Activated T-helper 1 cell treated with anti-CD3 and anti-CD28 coated beads, Interleukin-12 subunit alpha, Interleukin-12 subunit beta, Interleukin-2, Interleukin-4 antibody, amounts not matched to agents 30 ng/mL and 10 ng/mL and 1 ng/mL, durations not matched to agents 14 hours and 24 hours and 36 hours (primary cell): ENCODE measurements at regions of chr4 and their contacts with region 1.

Region 1: DNA sequence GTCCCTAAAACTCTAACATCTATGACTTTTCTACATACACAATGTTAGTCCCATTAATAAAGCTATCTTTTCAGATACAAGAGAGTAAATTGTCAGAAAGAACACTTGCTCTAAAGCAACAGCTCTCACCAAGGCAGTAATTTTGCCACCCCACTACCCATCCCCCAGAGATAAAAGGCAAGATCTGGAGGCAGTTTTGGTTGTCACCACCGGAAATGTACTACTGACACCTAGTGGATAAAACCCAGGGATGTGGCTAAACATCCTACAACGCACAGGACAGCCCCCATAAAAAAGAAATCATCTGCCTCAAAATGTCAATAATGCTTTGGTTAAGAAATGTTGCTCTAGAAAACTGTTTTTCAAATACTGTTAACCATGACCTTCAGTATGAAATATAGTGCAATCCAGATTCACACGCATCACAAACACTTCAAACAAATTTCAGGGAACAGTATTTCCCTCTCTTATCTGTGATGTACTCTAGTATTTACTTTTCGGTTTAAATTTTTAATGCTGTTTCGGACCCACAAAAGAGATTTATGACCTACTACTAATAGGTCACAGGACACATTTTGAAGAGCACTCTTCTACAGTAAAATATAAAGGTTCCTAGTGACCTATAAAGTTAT is 5.1 kb downstream of the FBXL5 start:
- DNase-seq: peak; percentile 60
- H3K4me3 Mint-ChIP-seq: peak overlapping the region; percentile 13
- H3K27ac Mint-ChIP-seq: peak overlapping the region; percentile 42
- H3K4me1 Mint-ChIP-seq: peaks cover 59% of the 10 kb centered on the region
- H3K27me3 Mint-ChIP-seq: no peaks in the 10 kb centered on the region

Region 2: DNA sequence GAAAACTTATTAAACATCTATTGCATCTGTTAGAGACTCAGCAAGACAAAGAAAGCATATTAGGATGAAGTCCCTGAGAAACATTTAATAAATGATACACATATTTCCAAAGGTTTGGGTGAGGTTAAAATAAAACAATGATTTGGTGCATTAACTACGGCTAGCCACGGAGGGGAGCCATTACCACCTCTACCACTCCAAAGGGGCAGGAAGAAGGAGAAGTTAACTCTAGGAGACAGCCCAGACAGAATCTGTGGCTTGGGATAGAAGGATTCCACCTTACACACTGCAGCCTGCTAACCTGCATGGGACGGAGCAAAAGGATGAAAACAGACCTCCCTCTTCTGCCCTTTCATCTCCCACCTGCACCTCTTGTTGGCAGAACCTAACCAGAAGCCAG is 411.3 kb before region 1 on chr4:
- intact Hi-C with region 1: loop called (anchors 1 kb)
- DNase-seq: no peak
- H3K4me3 Mint-ChIP-seq: no peak overlapping the region
- H3K27ac Mint-ChIP-seq: no peak overlapping the region
- H3K4me1 Mint-ChIP-seq: peaks cover 19% of the 10 kb centered on the region
- H3K27me3 Mint-ChIP-seq: no peaks in the 10 kb centered on the region

Region 3: GRCh38 chr4:15457406-15458201 is 192.4 kb before region 1 on chr4:
- intact Hi-C with region 1: loop called (anchors 1 kb)
- DNase-seq: no peak
- H3K4me3 Mint-ChIP-seq: no peak overlapping the region
- H3K27ac Mint-ChIP-seq: no peak overlapping the region
- H3K4me1 Mint-ChIP-seq: no peaks in the 10 kb centered on the region
- H3K27me3 Mint-ChIP-seq: peaks cover 7% of the 10 kb centered on the region

Region 4: DNA sequence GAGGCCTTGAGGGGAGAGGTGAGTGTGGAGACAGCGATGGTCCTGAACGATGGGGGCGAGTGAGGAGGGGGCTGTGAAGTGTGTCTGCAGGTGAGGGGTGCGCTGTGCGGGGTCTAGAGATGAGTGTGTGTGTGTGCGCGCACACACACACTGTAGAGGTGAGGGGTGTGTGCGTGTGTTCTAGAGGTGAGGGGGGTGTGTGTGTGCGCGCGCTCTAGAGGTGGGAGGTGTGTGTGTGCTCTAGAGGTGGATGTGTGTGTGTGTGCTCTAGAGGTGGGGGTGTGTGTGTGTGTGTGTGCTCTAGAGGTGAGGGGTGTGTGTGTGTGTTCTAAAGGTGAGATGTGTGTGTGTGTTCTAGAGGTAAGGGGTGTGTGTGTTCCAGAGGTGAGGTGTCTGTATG is 53.4 kb after region 1 on chr4:
- intact Hi-C with region 1: no loop called
- DNase-seq: no peak
- H3K4me3 Mint-ChIP-seq: peak overlapping the region; percentile 78
- H3K27ac Mint-ChIP-seq: no peak overlapping the region
- H3K4me1 Mint-ChIP-seq: no peaks in the 10 kb centered on the region
- H3K27me3 Mint-ChIP-seq: peaks cover 22% of the 10 kb centered on the region

Region 5: GRCh38 chr4:15836362-15836761 is 186.3 kb after region 1 on chr4:
- intact Hi-C with region 1: no loop called
- DNase-seq: no peak
- H3K4me3 Mint-ChIP-seq: no peak overlapping the region
- H3K27ac Mint-ChIP-seq: peak overlapping the region; percentile 18
- H3K4me1 Mint-ChIP-seq: peaks cover 34% of the 10 kb centered on the region
- H3K27me3 Mint-ChIP-seq: no peaks in the 10 kb centered on the region

Region 6: DNA sequence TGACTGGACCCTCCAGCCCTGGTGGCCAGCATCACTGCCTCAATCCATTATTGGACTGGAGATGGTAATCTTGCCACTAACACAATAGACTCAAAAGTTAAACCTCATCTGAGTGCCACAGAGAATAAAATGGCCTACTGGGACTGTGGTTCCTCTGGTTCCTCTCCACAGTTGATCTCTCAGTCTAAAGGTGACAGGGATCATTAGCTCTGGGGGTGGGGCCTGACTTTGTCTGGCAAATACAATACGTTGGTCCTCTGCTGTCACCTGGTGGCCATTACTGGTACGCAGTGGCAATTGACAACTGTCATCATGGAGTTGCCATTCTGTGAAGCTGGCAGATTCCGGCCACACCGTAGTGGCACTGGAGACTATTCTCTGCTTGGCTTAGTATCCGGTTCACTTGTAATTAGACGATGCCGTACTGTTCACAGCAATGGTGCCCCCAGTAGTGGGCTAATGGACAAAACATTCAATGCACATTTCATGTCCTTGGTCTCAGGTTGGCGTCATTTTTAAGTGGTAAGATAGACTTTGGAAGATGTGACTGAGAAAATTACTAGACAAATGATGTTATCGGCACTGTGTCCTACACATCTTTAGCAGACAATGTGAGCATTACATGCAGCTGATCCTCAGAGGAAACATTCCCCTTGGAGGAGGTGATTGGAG is 306.3 kb after region 1 on chr4:
- intact Hi-C with region 1: loop called (anchors 5 kb)
- DNase-seq: peak; percentile 61
- H3K4me3 Mint-ChIP-seq: no peak overlapping the region
- H3K27ac Mint-ChIP-seq: no peak overlapping the region
- H3K4me1 Mint-ChIP-seq: peaks cover 6% of the 10 kb centered on the region
- H3K27me3 Mint-ChIP-seq: peaks cover 11% of the 10 kb centered on the region